GM12878 (cell line): ENCODE measurements at regions of chr5 and their contacts with region 1.

Region 1: DNA sequence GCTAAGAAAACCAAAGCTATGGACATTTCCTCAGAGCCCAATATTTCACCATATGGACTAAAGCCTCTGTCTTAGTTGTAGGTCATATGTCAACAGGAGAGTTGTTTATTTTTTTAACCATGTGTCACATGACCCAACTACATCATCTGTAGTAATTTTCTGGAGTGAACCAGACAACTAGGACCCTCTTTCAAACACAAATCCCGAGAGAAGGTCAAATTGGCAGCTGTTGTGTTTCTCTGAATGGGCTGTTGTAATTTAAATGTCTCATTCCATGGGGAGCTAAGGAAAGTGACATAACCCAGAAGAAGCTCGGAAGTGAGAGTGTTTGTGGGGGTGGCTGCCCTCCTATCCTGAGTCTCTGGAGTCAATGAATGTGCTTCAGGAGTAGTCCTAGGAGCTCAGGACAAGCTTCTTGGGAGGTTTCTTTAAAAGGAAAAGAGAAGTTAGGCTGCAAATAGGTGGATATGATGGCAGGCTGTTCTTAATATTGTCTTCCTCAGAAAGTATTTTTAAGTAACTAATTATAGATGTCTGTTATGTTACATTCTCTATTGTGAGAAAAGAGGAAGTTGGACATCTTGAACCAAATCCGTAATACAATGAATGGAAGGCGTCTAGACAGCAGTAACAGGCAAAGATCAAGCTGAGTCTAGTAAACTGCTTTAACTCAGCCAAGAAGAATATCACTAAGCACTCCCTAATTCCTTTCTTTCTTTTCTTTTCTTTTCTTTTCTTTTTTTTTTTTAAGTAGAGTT is 50.1 kb downstream of the TMEM167A start:
- DNase-seq: peak; percentile 30
- ATAC-seq: peak; percentile 92
- H3K4me3 ChIP-seq: no peak overlapping the region
- H3K27ac ChIP-seq: no peak overlapping the region; the same call in 1 of the 2 replicates
- H3K4me1 ChIP-seq: peaks cover 6% of the 10 kb centered on the region; the same call in 1 of the 2 replicates
- H3K27me3 ChIP-seq: no peaks in the 10 kb centered on the region
- CTCF ChIP-seq: no peak
- EP300 ChIP-seq: no peak
- POLR2A ChIP-seq: no peak
- RAD21 ChIP-seq: no peak

Region 2: GRCh38 chr5:82975396-82975795 is 51.7 kb before region 1 on chr5:
- CTCF ChIA-PET with region 1: no interaction called
- POLR2A ChIA-PET with region 1: no interaction called
- RAD21 ChIA-PET with region 1: no interaction called
- SMC1A ChIA-PET with region 1: no interaction called
- in situ Hi-C with region 1: no loop called
- intact Hi-C with region 1: no loop called
- DNase-seq: no peak
- ATAC-seq: no peak
- H3K4me3 ChIP-seq: no peak overlapping the region
- H3K27ac ChIP-seq: no peak overlapping the region
- H3K4me1 ChIP-seq: no peaks in the 10 kb centered on the region
- H3K27me3 ChIP-seq: no peaks in the 10 kb centered on the region
- CTCF ChIP-seq: no peak
- EP300 ChIP-seq: no peak
- POLR2A ChIP-seq: no peak
- RAD21 ChIP-seq: no peak

Region 3: GRCh38 chr5:83011985-83012384 is 15.1 kb before region 1 on chr5:
- CTCF ChIA-PET with region 1: interaction called, 8 read pairs
- POLR2A ChIA-PET with region 1: interaction called, 3 read pairs
- RAD21 ChIA-PET with region 1: interaction called, 3 read pairs
- SMC1A ChIA-PET with region 1: interaction called, 10 read pairs
- in situ Hi-C with region 1: no loop called
- intact Hi-C with region 1: no loop called
- DNase-seq: peak; percentile 69
- ATAC-seq: peak; percentile 99
- H3K4me3 ChIP-seq: no peak overlapping the region
- H3K27ac ChIP-seq: no peak overlapping the region; the same call in 1 of the 2 replicates
- H3K4me1 ChIP-seq: peaks cover 5% of the 10 kb centered on the region; the same call in 1 of the 2 replicates
- H3K27me3 ChIP-seq: no peaks in the 10 kb centered on the region
- CTCF ChIP-seq: no peak
- EP300 ChIP-seq: peak in 1 of 2 experiments; percentile 38; a peak in 1 of 4 replicates
- POLR2A ChIP-seq: no peak
- RAD21 ChIP-seq: no peak